Left colon (tissue), 2 donors: ENCODE measurements at regions of chr3 and their contacts with region 1.

Region 1: DNA sequence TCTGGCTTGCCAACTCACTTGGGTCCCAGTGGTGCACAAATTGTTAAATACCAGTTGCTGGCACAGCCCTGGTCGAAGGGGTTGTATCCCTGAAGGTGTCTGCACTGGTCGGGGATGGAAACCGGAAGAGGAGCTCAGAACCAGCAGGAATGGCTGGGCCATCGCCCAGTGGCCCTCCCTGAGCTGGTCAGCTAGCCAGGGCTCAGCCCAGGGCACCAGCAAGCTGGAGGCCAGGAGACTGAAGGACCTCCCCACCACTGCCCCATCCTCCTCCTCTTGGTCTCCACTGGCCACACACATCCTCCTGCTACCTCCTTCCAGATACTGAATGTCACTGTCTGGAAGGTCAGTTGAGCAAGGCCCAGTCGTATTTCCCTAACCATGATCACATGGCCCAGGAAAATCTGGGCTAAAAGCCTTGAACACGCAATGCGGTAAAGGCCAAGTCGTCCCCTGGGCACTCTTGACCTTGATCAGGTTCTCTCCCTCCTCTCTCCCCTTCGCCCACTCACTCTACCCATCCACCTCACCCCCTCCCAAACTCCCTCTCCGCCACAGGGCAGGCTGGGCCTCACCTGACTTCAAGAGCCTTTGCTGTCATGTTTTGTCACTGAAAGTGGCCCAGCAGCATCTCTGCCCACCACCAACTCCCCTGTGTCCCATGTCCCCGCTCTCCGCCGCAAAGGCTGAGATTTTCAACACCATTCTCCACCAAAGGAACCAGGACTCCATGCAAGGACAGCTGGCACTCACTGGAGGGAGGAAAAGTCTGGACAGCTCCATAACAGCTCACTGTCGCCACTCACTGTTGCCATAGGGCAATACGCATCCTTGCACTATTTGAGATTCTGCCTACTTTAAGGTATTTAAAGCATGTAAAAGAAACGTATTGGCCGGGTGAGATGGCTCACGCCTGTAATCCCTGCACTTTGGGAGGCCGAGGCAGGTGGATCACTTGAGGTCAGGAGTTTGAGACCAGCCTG is 12.1 kb downstream of the ZDHHC19 start:
- DNase-seq: no peak
- ATAC-seq: peak; percentile 34

Region 2: GRCh38 chr3:196023947-196024346 is 175.1 kb before region 1 on chr3:
- intact Hi-C with region 1: no loop called
- DNase-seq: no peak
- ATAC-seq: no peak

Region 3: GRCh38 chr3:196073188-196073838 is 125.7 kb before region 1 on chr3:
- intact Hi-C with region 1: loop called (anchors 5 kb)
- DNase-seq: peak in 1 of 2 donors; percentile 67
- ATAC-seq: peak; percentile 89

Region 4: GRCh38 chr3:196432137-196432879 is 233.2 kb after region 1 on chr3 and contains the start of gene UBXN7:
- intact Hi-C with region 1: no loop called
- DNase-seq: peak; percentile 92 to 96
- ATAC-seq: peak; percentile 95
- total RNA-seq, gene UBXN7: 25.9 to 35.2 TPM

Region 5: GRCh38 chr3:197501496-197501878 is 1302.4 kb after region 1 on chr3:
- intact Hi-C with region 1: no loop called
- DNase-seq: peak; percentile 76 to 82
- ATAC-seq: peak; percentile 54